GM12878 (cell line): ENCODE measurements at regions of chr11 and their contacts with region 1.

Region 1: DNA sequence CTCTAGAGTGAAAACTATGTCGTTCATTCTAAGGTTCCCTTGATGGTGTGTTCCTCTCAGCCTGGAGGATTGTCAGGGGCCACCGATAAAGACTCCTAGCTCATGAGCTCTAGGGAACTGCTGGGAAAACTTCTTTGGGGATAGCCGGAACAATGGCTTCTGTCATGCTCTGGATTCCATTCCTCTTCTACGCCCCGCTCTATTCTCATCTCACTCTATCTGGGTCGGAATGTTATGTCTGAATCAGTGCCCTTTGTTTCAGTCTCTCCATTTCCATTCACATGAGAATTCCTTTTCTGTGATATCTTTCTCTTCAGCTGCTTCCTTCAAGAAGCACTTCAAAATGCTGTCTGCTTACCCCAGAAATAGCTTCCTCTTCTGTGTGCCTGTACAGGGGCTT is 16.9 kb upstream of the SLCO2B1 start:
- DNase-seq: no peak
- ATAC-seq: no peak
- H3K4me3 ChIP-seq: no peak overlapping the region
- H3K27ac ChIP-seq: no peak overlapping the region
- H3K4me1 ChIP-seq: no peaks in the 10 kb centered on the region
- H3K27me3 ChIP-seq: no peaks in the 10 kb centered on the region; a peak in 1 of 4 replicates
- CTCF ChIP-seq: no peak
- EP300 ChIP-seq: no peak
- POLR2A ChIP-seq: no peak
- RAD21 ChIP-seq: no peak

Region 2: GRCh38 chr11:75147875-75148263 is 13.9 kb after region 1 on chr11:
- CTCF ChIA-PET with region 1: interaction called, 11 read pairs
- POLR2A ChIA-PET with region 1: no interaction called
- RAD21 ChIA-PET with region 1: no interaction called
- SMC1A ChIA-PET with region 1: no interaction called
- in situ Hi-C with region 1: no loop called
- intact Hi-C with region 1: no loop called
- DNase-seq: no peak
- ATAC-seq: no peak
- H3K4me3 ChIP-seq: no peak overlapping the region
- H3K27ac ChIP-seq: no peak overlapping the region
- H3K4me1 ChIP-seq: peaks cover 12% of the 10 kb centered on the region
- H3K27me3 ChIP-seq: no peaks in the 10 kb centered on the region
- CTCF ChIP-seq: no peak
- EP300 ChIP-seq: no peak
- POLR2A ChIP-seq: no peak
- RAD21 ChIP-seq: no peak